Caco-2 (cell line): ENCODE measurements at regions of chr9 and their contacts with region 1.

Region 1: GRCh38 chr9:85053206-85053786 is 383.8 kb downstream of the NTRK2 start:
- DNase-seq: peak; percentile 13 to 39
- H3K4me3 ChIP-seq: no peak overlapping the region
- H3K4me3 Mint-ChIP-seq: peak overlapping the region; percentile 64
- H3K27ac Mint-ChIP-seq: peak overlapping the region; percentile 79
- H3K4me1 ChIP-seq: peaks cover 16% of the 10 kb centered on the region
- H3K4me1 Mint-ChIP-seq: peaks cover 13% of the 10 kb centered on the region
- H3K27me3 ChIP-seq: no peaks in the 10 kb centered on the region
- H3K27me3 Mint-ChIP-seq: no peaks in the 10 kb centered on the region
- CTCF ChIP-seq: no peak

Region 2: DNA sequence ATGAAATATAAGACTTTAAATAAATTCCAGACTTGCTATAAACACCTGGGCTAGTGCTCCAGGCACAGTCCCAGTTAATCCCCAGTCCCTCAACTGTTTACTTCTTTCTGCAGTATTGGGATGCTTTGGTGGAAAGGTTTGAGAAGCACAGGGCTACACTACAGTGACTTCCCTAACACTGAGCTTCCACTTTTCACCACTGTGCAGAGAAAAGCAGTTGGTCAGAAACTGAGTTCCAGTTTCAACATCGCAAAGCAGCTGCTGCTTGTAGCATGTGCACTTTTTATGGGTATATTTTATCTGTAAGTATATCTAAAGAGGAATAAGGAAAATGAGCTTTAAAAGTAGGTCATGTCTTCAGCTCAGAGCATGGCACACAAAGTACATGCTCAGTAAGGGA is 44.0 kb before region 1 on chr9:
- CTCF ChIA-PET with region 1: no interaction called
- POLR2A ChIA-PET with region 1: no interaction called
- intact Hi-C with region 1: no loop called
- DNase-seq: no peak
- H3K4me3 ChIP-seq: no peak overlapping the region
- H3K4me3 Mint-ChIP-seq: no peak overlapping the region
- H3K27ac Mint-ChIP-seq: no peak overlapping the region
- H3K4me1 ChIP-seq: no peaks in the 10 kb centered on the region
- H3K4me1 Mint-ChIP-seq: no peaks in the 10 kb centered on the region
- H3K27me3 ChIP-seq: no peaks in the 10 kb centered on the region
- H3K27me3 Mint-ChIP-seq: no peaks in the 10 kb centered on the region
- CTCF ChIP-seq: no peak

Region 3: DNA sequence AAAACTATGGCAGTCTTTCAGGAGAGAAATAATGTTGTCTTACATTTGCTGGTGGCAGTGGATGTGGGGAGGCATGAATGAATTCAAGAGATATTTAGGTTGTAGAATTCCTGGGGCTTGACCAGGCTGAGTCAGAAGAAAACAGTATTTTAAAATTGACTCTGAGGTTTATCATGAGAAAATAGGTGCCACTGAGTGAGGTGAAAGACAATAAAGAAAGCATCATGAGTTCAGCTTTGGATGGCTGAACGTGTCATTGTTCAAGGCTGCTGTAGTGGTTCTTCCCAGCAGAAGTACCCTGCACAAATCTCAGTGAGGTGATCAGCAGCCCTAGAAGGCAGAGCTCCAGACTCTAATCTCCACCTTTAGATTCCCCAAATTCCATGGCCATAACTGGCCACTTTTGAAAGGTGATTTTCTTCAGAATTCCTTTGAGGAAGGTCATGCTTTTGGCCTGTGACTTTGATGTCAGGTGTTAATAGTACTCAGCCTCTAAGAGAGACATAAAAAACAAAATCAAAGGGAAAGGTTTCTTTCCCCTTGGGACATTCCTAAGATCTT is 11.6 kb after region 1 on chr9:
- CTCF ChIA-PET with region 1: no interaction called
- POLR2A ChIA-PET with region 1: no interaction called
- intact Hi-C with region 1: loop called (anchors 1 kb)
- DNase-seq: peak; percentile 35 to 56
- H3K4me3 ChIP-seq: no peak overlapping the region
- H3K4me3 Mint-ChIP-seq: peak overlapping the region; percentile 33
- H3K27ac Mint-ChIP-seq: peak overlapping the region; percentile 60
- H3K4me1 ChIP-seq: peaks cover 21% of the 10 kb centered on the region
- H3K4me1 Mint-ChIP-seq: peaks cover 12% of the 10 kb centered on the region
- H3K27me3 ChIP-seq: no peaks in the 10 kb centered on the region
- H3K27me3 Mint-ChIP-seq: no peaks in the 10 kb centered on the region
- CTCF ChIP-seq: no peak